IMR-90 (cell line): ENCODE measurements at regions of chr7 and their contacts with region 1.

Region 1: GRCh38 chr7:51162724-51163329 is 153.8 kb downstream of the COBL start:
- DNase-seq: peak; percentile 75
- ATAC-seq: peak; percentile 93
- H3K4me3 ChIP-seq: no peak overlapping the region
- H3K27ac ChIP-seq: no peak overlapping the region
- H3K4me1 ChIP-seq: no peaks in the 10 kb centered on the region
- H3K27me3 ChIP-seq: peaks cover 10% of the 10 kb centered on the region; the same call in 1 of the 2 replicates
- CTCF ChIP-seq: peak; percentile 73
- POLR2A ChIP-seq: no peak
- RAD21 ChIP-seq: peak; percentile 54

Region 2: GRCh38 chr7:50092579-50093491 is 1070.0 kb before region 1 on chr7 and contains the start of gene ZPBP:
- CTCF ChIA-PET with region 1: interaction called, 4 read pairs
- POLR2A ChIA-PET with region 1: no interaction called
- dilution Hi-C with region 1: no loop called
- in situ Hi-C with region 1: no loop called
- intact Hi-C with region 1: loop called (anchors 5 kb)
- DNase-seq: peak; percentile 4
- ATAC-seq: no peak
- H3K4me3 ChIP-seq: no peak within 1 kb of the TSS
- H3K27ac ChIP-seq: no peak within 1 kb of the TSS
- H3K4me1 ChIP-seq: no peaks in the 10 kb centered on the region
- H3K27me3 ChIP-seq: no peaks in the 10 kb centered on the region
- CTCF ChIP-seq: peak; percentile 62
- POLR2A ChIP-seq: no peak
- RAD21 ChIP-seq: peak; percentile 61
- total RNA-seq, gene ZPBP: not detected in 2 replicates

Region 3: GRCh38 chr7:50142425-50143017 is 1020.3 kb before region 1 on chr7:
- CTCF ChIA-PET with region 1: interaction called, 6 read pairs
- POLR2A ChIA-PET with region 1: no interaction called
- dilution Hi-C with region 1: no loop called
- in situ Hi-C with region 1: loop called (anchors 25 kb)
- intact Hi-C with region 1: loop called (anchors 1 kb)
- DNase-seq: peak; percentile 21
- ATAC-seq: peak; percentile 60; the same call in 1 of the 2 replicates
- H3K4me3 ChIP-seq: no peak overlapping the region
- H3K27ac ChIP-seq: no peak overlapping the region
- H3K4me1 ChIP-seq: no peaks in the 10 kb centered on the region
- H3K27me3 ChIP-seq: no peaks in the 10 kb centered on the region
- CTCF ChIP-seq: peak; percentile 63
- POLR2A ChIP-seq: no peak
- RAD21 ChIP-seq: peak; percentile 48

Region 4: GRCh38 chr7:50467817-50468610 is 694.8 kb before region 1 on chr7:
- CTCF ChIA-PET with region 1: interaction called, 34 read pairs
- POLR2A ChIA-PET with region 1: no interaction called
- dilution Hi-C with region 1: no loop called
- in situ Hi-C with region 1: no loop called
- intact Hi-C with region 1: loop called (anchors 1 kb)
- DNase-seq: peak; percentile 58
- ATAC-seq: peak; percentile 100
- H3K4me3 ChIP-seq: no peak overlapping the region
- H3K27ac ChIP-seq: no peak overlapping the region
- H3K4me1 ChIP-seq: no peaks in the 10 kb centered on the region
- H3K27me3 ChIP-seq: peaks cover 19% of the 10 kb centered on the region
- CTCF ChIP-seq: peak; percentile 92
- POLR2A ChIP-seq: peak; percentile 36; the same call in 1 of the 2 replicates
- RAD21 ChIP-seq: peak; percentile 96

Region 5: GRCh38 chr7:51175316-51175991 is 12.6 kb after region 1 on chr7:
- CTCF ChIA-PET with region 1: interaction called, 10 read pairs
- POLR2A ChIA-PET with region 1: no interaction called
- dilution Hi-C with region 1: no loop called
- in situ Hi-C with region 1: no loop called
- intact Hi-C with region 1: no loop called
- DNase-seq: no peak
- ATAC-seq: no peak
- H3K4me3 ChIP-seq: no peak overlapping the region
- H3K27ac ChIP-seq: no peak overlapping the region
- H3K4me1 ChIP-seq: no peaks in the 10 kb centered on the region
- H3K27me3 ChIP-seq: no peaks in the 10 kb centered on the region; the same call in 1 of the 2 replicates
- CTCF ChIP-seq: no peak
- POLR2A ChIP-seq: no peak
- RAD21 ChIP-seq: no peak